Mammary epithelial cell (primary cell): ENCODE measurements at regions of chr11 and their contacts with region 1.

Region 1: GRCh38 chr11:117143871-117144476 is at the start of gene PAFAH1B2:
- DNase-seq: peak; percentile 92
- H3K4me3 ChIP-seq: peak within 1 kb of the TSS; percentile 60 to 82 (median 66)
- H3K27ac ChIP-seq: peak within 1 kb of the TSS; percentile 88
- H3K4me1 ChIP-seq: peaks cover 8% of the 10 kb centered on the region
- H3K27me3 ChIP-seq: no peaks in the 10 kb centered on the region
- CTCF ChIP-seq: no peak
- total RNA-seq, gene PAFAH1B2: 129 to 177 TPM

Region 2: GRCh38 chr11:117072517-117073461 is 71.2 kb before region 1 on chr11:
- CTCF ChIA-PET with region 1: interaction called, 20 read pairs
- dilution Hi-C with region 1: no loop called
- in situ Hi-C with region 1: no loop called
- intact Hi-C with region 1: no loop called
- DNase-seq: peak; percentile 92
- H3K4me3 ChIP-seq: no peak overlapping the region
- H3K27ac ChIP-seq: peak overlapping the region; percentile 43
- H3K4me1 ChIP-seq: peaks cover 42% of the 10 kb centered on the region
- H3K27me3 ChIP-seq: no peaks in the 10 kb centered on the region
- CTCF ChIP-seq: no peak

Region 3: GRCh38 chr11:117083011-117083935 is 60.7 kb before region 1 on chr11:
- CTCF ChIA-PET with region 1: no interaction called
- dilution Hi-C with region 1: no loop called
- in situ Hi-C with region 1: no loop called
- intact Hi-C with region 1: no loop called
- DNase-seq: no peak
- H3K4me3 ChIP-seq: no peak overlapping the region
- H3K27ac ChIP-seq: no peak overlapping the region
- H3K4me1 ChIP-seq: peaks cover 7% of the 10 kb centered on the region
- H3K27me3 ChIP-seq: no peaks in the 10 kb centered on the region
- CTCF ChIP-seq: no peak

Region 4: DNA sequence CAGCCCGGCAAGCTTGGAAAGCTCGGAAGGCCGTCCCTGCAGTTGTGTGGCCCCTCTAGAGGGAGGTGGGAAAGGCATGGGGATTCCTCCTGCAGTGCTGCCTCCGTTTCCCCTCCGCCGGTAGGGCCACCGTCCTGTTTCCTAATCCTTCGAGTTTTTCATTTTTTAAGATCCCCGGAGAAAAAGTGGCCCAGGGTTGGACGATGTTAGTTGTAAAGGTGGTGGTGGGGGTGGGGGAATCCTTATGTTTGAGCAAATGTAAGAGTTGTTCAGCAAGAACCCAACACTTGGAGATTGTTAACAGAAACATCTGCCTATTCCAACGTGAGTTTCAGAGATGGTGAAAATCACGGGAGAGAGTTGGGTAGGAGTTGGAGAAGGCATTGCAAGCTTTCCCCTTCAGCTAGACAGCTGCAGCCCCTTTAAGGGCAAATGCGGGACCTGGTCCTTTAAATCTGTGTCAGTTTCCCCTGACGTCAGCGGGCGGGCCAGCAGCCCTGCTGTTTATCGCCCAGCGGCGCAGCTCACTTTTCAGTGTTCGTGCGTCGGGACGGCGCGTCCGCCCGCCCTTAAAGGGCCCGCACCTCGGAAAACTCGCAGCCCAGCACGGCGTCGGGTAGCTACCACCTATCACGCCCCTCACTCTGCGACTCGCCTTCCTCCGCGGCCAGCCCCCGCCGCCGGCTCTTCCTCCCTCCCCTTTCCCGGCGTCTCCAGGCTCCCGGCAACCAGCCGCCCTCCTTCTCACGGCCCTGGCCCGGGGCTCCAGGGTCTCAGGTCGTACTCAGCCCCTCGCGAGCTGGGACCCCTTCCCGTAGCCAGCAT is 34.4 kb after region 1 on chr11 and contains the start of gene SIDT2:
- CTCF ChIA-PET with region 1: interaction called, 13 read pairs
- dilution Hi-C with region 1: no loop called
- in situ Hi-C with region 1: no loop called
- intact Hi-C with region 1: no loop called
- DNase-seq: peak; percentile 85
- H3K4me3 ChIP-seq: peak within 1 kb of the TSS; percentile 74 to 80 (median 74)
- H3K27ac ChIP-seq: peak within 1 kb of the TSS; percentile 42
- H3K4me1 ChIP-seq: peaks cover 25% of the 10 kb centered on the region
- H3K27me3 ChIP-seq: no peaks in the 10 kb centered on the region
- CTCF ChIP-seq: no peak
- total RNA-seq, gene SIDT2: 17.2 to 30.6 TPM